ENCODE measurements at regions of chr10 and their contacts with region 1.

Region 1: DNA sequence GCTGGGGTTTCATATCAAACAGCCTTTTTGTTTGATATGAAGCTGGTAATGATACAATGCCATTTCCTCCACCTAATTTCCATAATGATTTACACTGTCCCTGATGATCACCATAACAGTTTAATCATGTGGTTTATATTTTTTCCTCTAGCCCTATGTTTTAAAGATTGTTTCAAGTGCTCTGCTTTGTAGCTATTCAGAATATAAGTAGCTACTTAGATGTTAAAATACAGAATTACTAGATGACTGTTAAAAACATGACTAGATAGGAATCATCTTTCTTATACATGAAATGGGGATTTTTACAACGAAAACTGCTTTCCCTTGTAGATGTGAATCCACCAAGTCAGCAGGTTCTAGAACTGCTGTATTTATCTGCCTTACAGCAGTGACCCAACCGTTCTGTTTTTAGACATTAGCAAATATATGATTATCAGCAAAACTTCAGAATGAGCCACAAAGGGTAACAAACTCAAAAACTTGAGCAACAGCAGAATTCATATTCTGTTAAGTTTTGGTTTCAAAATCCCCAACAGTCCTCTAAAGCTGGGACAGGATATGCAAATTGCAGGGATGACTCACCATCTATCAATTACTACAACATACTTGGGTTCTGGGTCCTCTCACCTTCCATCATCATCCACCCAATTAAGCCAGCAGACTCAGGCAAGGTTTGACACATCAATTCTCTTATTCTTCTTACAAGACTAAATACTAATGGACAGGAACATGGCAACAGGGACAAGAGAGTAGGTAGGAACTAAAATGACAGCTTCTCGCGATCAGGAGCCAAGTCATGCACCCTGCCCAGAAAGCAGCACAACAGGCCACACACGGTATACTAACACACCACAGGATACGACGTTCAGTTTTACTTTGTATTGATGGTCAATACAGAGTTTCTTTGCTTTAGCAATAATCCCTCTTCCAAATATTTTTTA is 83.9 kb downstream of the PIP4K2A start:
- DNase-seq: peak; percentile 78
- ATAC-seq: peak; percentile 83
- H3K4me3 ChIP-seq: peak overlapping the region; percentile 7 to 48 (median 30)
- H3K4me3 Mint-ChIP-seq: peak overlapping the region; percentile 77
- H3K27ac ChIP-seq: peak overlapping the region; percentile 87 to 88
- H3K27ac Mint-ChIP-seq: peak overlapping the region; percentile 90
- H3K4me1 ChIP-seq: peaks cover 64 to 81% of the 10 kb centered on the region in 2 donors
- H3K4me1 Mint-ChIP-seq: peaks cover 92% of the 10 kb centered on the region
- H3K27me3 ChIP-seq: no peaks in the 10 kb centered on the region
- H3K27me3 Mint-ChIP-seq: no peaks in the 10 kb centered on the region
- CTCF ChIP-seq: no peak

Region 2: DNA sequence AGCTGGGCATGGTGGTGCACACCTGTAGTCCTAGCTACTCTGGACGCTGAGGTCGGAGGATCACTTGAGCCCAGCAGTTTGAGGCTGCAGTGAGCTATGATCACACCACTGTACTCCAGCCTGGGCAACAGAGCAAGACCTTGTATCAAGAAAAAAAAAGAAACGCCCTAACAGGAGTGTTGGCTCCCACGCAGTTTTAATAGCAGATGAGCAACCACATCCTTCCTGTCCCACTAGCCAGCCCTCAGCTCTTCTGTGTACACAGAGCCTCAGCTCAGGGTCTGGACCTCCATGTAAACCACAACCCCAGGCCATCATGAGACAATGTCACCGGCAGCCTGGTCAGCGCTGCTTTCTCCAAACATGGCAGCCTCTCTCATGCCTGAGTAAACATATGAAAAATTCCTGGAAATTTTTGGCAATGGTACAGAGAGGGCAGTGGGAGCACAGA is 24.3 kb before region 1 on chr10:
- CTCF ChIA-PET with region 1: interaction called, 9 read pairs
- POLR2A ChIA-PET with region 1: interaction called, 7 read pairs
- intact Hi-C with region 1: loop called (anchors 1 kb)
- DNase-seq: peak; percentile 82
- ATAC-seq: peak; percentile 78
- H3K4me3 ChIP-seq: peak overlapping the region in 3 of 5 experiments; percentile 0 to 51 (median 18)
- H3K4me3 Mint-ChIP-seq: peak overlapping the region; percentile 70
- H3K27ac ChIP-seq: peak overlapping the region; percentile 78 to 91
- H3K27ac Mint-ChIP-seq: peak overlapping the region; percentile 88
- H3K4me1 ChIP-seq: peaks cover 84 to 88% of the 10 kb centered on the region in 2 donors
- H3K4me1 Mint-ChIP-seq: peaks cover 87% of the 10 kb centered on the region
- H3K27me3 ChIP-seq: no peaks in the 10 kb centered on the region
- H3K27me3 Mint-ChIP-seq: no peaks in the 10 kb centered on the region
- CTCF ChIP-seq: no peak

Region 3: DNA sequence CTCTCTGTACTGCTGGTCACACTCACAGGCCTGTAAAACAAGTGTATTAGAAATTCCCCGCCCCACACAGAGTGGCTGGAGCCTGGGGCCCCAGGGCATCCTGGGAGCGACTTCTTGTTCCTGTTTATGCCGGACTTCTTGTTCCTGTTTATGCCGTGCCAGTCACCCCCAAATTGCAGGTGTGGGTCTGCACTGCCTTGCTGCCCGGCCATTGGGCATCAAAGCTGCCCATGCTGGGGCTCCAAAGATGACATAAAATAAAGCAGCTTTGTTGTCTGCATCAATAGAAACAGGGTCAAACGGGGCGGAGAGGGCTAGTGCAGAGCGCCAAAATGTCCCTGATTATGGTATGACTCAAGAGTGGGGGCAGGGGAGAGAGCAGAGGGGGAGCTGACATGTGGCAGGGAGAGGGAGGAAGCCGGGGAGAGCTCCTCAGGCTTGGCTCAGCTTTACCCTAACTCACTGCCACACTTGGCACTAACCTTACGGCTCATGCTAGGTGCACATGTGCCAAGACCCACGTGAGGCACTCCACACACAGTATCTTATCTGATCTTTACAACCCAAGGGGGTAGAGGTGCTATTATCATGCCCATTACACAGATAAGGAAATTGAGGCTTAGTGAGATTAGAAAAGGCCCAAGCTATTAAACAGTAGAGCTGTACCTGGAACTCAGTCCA is 14.5 kb before region 1 on chr10:
- CTCF ChIA-PET with region 1: interaction called, 11 read pairs
- POLR2A ChIA-PET with region 1: interaction called, 7 read pairs
- intact Hi-C with region 1: loop called (anchors 1 kb)
- DNase-seq: peak; percentile 72
- ATAC-seq: peak; percentile 75
- H3K4me3 ChIP-seq: peak overlapping the region in 3 of 5 experiments; percentile 7 to 45 (median 36)
- H3K4me3 Mint-ChIP-seq: peak overlapping the region; percentile 83
- H3K27ac ChIP-seq: peak overlapping the region; percentile 71 to 87
- H3K27ac Mint-ChIP-seq: peak overlapping the region; percentile 94
- H3K4me1 ChIP-seq: peaks cover 76 to 79% of the 10 kb centered on the region in 2 donors
- H3K4me1 Mint-ChIP-seq: peaks cover 95% of the 10 kb centered on the region
- H3K27me3 ChIP-seq: no peaks in the 10 kb centered on the region
- H3K27me3 Mint-ChIP-seq: no peaks in the 10 kb centered on the region
- CTCF ChIP-seq: no peak

Region 4: DNA sequence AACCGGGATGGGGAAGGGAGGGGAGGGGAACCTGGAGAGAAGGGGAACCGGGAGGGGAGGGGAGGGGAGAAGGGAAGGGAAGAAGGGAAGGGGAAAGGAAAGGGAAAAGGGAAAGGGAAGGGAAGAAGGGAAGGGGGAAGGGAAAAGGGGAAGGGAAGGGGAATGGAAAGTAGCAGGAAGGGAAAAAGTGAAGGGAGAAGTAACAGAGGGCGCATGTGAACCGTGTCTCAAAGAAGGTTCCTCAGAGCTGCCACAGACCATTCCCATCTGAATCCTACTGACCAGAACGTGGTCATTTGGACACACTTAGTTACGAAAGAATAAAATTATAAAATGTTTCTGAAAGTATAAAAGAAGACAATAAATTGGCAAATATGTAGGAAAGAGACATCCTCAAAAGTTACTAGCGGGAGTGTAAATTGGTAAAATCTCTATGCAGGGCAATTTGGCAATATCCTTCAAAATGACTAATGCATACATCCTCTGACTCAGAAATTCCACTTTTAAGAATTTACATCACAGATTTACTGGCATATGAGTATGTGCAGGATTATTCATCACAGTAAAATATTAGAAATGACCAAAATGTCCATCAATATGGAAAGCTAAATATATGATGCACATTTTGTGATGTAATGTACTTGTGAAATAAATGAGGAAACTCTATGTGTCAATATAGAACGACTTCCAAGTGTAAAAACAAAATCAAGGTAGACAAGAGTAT is 701.2 kb after region 1 on chr10:
- CTCF ChIA-PET with region 1: no interaction called
- POLR2A ChIA-PET with region 1: interaction called, 12 read pairs
- intact Hi-C with region 1: no loop called
- DNase-seq: no peak
- ATAC-seq: no peak
- H3K4me3 ChIP-seq: no peak overlapping the region
- H3K4me3 Mint-ChIP-seq: no peak overlapping the region
- H3K27ac ChIP-seq: no peak overlapping the region
- H3K27ac Mint-ChIP-seq: no peak overlapping the region
- H3K4me1 ChIP-seq: no peaks in the 10 kb centered on the region
- H3K4me1 Mint-ChIP-seq: no peaks in the 10 kb centered on the region
- H3K27me3 ChIP-seq: peaks cover 0 to under 1% (median 0%) of the 10 kb centered on the region in 4 experiments
- H3K27me3 Mint-ChIP-seq: peaks cover 3% of the 10 kb centered on the region
- CTCF ChIP-seq: no peak

Measured in B cell (primary cell).